ENCODE measurements at regions of chr2 and their contacts with region 1.

Region 1: GRCh38 chr2:182650704-182651103 is 65.4 kb upstream of the DNAJC10 start:
- DNase-seq: no peak
- ATAC-seq: peak; percentile 67

Region 2: GRCh38 chr2:182186132-182186735 is 464.5 kb before region 1 on chr2:
- intact Hi-C with region 1: loop called (anchors 2 kb)
- DNase-seq: no peak
- ATAC-seq: peak; percentile 56

Region 3: GRCh38 chr2:182545420-182546167 is 105.1 kb before region 1 on chr2:
- intact Hi-C with region 1: loop called (anchors 10 kb)
- DNase-seq: no peak
- ATAC-seq: no peak

Region 4: GRCh38 chr2:182728014-182728413 is 77.3 kb after region 1 on chr2:
- intact Hi-C with region 1: no loop called
- DNase-seq: no peak
- ATAC-seq: no peak

Measured in left ventricle myocardium superior (tissue), 1 donor.